PC-3 (cell line): ENCODE measurements at regions of chr5 and their contacts with region 1.

Region 1: DNA sequence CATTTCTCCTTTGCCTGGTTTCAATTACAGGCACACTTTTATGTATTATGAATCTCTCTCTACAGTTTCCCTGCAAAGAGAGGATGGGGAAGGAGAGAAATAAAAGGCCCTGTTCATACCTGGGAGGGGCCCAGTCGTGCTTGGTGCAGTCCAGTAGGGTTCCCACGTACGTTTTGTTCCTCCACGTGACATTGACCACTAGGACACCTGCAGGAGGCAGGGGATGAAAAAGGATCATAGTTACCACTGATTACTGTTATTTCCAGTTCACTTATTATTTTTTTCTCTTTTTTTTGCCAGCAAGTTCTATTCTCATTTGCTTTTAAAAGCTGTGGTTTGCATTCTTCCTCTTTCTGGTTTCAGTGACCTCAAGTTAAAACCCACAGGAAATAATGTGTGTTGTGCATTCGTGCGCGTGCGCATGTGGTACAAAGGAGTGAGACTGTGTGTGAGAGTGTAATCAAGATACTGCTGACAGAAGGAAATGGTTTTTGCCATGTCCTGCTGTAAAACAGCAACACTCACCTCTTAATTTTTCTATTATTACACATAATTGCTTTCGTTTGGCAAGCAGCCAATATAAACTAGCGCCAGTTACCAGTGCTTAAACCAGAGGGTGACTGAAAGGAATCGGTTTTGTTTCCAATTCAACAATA is 96.8 kb downstream of the ZNF608 start:
- DNase-seq: peak; percentile 70
- ATAC-seq: peak; percentile 45
- H3K4me3 ChIP-seq: peak overlapping the region; percentile 29; the same call in 1 of the 2 replicates
- H3K27ac ChIP-seq: 0 out of 2 replicates have a peak overlapping the region, but pooled peaks have one; percentile 10
- H3K4me1 ChIP-seq: peaks cover 32% of the 10 kb centered on the region
- H3K27me3 ChIP-seq: no peaks in the 10 kb centered on the region
- CTCF ChIP-seq: no peak

Region 2: GRCh38 chr5:124410539-124411488 is 238.8 kb before region 1 on chr5:
- CTCF ChIA-PET with region 1: no interaction called
- POLR2A ChIA-PET with region 1: no interaction called
- intact Hi-C with region 1: loop called (anchors 10 kb)
- DNase-seq: no peak
- ATAC-seq: peak; percentile 24; the same call in 1 of the 2 replicates
- H3K4me3 ChIP-seq: no peak overlapping the region
- H3K27ac ChIP-seq: no peak overlapping the region
- H3K4me1 ChIP-seq: no peaks in the 10 kb centered on the region
- H3K27me3 ChIP-seq: no peaks in the 10 kb centered on the region
- CTCF ChIP-seq: no peak

Region 3: DNA sequence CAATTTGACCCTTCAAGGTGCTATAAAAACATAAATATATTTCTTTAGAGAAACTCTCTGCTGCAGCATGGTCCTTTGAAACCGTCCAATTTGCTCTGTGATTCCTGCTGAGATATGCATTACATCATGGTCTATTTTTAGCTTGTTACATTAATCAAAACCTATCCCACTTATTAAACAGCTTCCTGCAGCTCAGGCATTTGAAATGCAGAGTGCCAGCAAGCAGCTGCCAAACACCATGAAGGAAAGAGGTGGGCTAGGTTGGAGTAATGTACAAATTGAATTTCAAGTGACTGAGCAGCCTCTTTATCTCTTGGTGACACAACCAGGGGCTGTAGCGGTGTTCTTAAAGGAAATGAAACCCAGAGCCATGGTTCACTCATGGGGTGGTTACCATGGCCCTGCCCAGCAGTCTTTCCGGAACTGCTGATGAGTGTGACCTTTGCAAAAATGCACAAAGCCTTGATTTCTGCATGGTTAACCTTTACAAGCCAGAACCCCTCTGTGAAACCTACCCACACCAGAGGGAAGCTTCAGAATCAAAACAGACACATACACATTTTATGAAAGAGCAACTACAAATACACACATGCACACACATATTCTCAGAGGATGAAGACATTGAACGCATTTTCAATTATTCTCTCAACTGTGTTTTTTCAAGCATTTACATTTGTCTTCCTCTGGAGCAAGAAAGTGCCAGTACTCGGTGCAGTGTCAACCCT is 252.6 kb after region 1 on chr5:
- CTCF ChIA-PET with region 1: no interaction called
- POLR2A ChIA-PET with region 1: no interaction called
- intact Hi-C with region 1: loop called (anchors 10 kb)
- DNase-seq: no peak
- ATAC-seq: no peak
- H3K4me3 ChIP-seq: no peak overlapping the region
- H3K27ac ChIP-seq: no peak overlapping the region
- H3K4me1 ChIP-seq: peaks cover 6% of the 10 kb centered on the region
- H3K27me3 ChIP-seq: no peaks in the 10 kb centered on the region
- CTCF ChIP-seq: no peak

Region 4: DNA sequence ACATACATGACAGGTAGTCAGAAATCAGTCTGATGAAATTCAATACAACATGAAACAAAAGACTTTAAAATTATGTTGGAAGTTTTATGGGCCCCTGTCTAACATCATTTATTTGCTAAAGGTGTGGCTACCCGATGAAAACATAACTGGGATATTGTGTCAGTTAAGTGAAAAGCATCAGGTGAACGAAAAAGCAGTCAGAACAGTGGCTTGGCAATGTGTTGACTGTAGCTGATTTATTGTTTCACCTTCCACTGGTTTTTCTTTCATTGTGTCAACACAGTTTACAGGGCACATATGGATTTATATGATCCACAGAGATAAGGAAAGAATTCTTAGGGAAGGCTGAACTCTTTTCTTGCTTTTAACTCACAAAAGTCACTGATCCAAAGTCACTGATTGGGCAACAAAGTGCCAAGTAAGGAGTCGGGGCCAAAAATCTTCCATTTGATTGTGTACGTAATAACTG is 526.4 kb after region 1 on chr5:
- CTCF ChIA-PET with region 1: no interaction called
- POLR2A ChIA-PET with region 1: no interaction called
- intact Hi-C with region 1: loop called (anchors 10 kb)
- DNase-seq: peak; percentile 87
- ATAC-seq: peak; percentile 94
- H3K4me3 ChIP-seq: no peak overlapping the region
- H3K27ac ChIP-seq: peak overlapping the region; percentile 79
- H3K4me1 ChIP-seq: peaks cover 21% of the 10 kb centered on the region
- H3K27me3 ChIP-seq: no peaks in the 10 kb centered on the region
- CTCF ChIP-seq: no peak

Region 5: GRCh38 chr5:125484742-125485641 is 835.4 kb after region 1 on chr5:
- CTCF ChIA-PET with region 1: no interaction called
- POLR2A ChIA-PET with region 1: no interaction called
- intact Hi-C with region 1: loop called (anchors 10 kb)
- DNase-seq: peak; percentile 87
- ATAC-seq: peak; percentile 90
- H3K4me3 ChIP-seq: peak overlapping the region; percentile 58
- H3K27ac ChIP-seq: peak overlapping the region; percentile 93
- H3K4me1 ChIP-seq: peaks cover 32% of the 10 kb centered on the region
- H3K27me3 ChIP-seq: no peaks in the 10 kb centered on the region
- CTCF ChIP-seq: no peak